WTC11 (cell line): ENCODE measurements at regions of chr22 and their contacts with region 1.

Region 1: GRCh38 chr22:30386960-30387827 is at the start of gene RNF215:
- DNase-seq: peak; percentile 96
- ATAC-seq: peak; percentile 83
- H3K4me3 Mint-ChIP-seq: peak within 1 kb of the TSS; percentile 79
- H3K27ac Mint-ChIP-seq: peak within 1 kb of the TSS; percentile 96
- H3K4me1 Mint-ChIP-seq: peaks cover 14% of the 10 kb centered on the region
- H3K27me3 Mint-ChIP-seq: peaks cover 11% of the 10 kb centered on the region
- CTCF ChIP-seq: peak; percentile 96
- total RNA-seq, gene RNF215: 25.4 to 28.6 TPM (median 27.6 TPM) in 3 replicates

Region 2: GRCh38 chr22:30326706-30327362 is 60.4 kb before region 1 on chr22 and contains the start of gene TBC1D10A:
- CTCF ChIA-PET with region 1: interaction called, 24 read pairs
- POLR2A ChIA-PET with region 1: interaction called, 5 read pairs
- DNase-seq: peak; percentile 95
- ATAC-seq: peak; percentile 93
- H3K4me3 Mint-ChIP-seq: peak within 1 kb of the TSS; percentile 75
- H3K27ac Mint-ChIP-seq: peak within 1 kb of the TSS; percentile 89
- H3K4me1 Mint-ChIP-seq: peaks cover 28% of the 10 kb centered on the region
- H3K27me3 Mint-ChIP-seq: no peaks in the 10 kb centered on the region
- CTCF ChIP-seq: no peak
- total RNA-seq, gene TBC1D10A: 7.5 to 11.1 TPM (median 9.6 TPM) in 3 replicates

Region 3: DNA sequence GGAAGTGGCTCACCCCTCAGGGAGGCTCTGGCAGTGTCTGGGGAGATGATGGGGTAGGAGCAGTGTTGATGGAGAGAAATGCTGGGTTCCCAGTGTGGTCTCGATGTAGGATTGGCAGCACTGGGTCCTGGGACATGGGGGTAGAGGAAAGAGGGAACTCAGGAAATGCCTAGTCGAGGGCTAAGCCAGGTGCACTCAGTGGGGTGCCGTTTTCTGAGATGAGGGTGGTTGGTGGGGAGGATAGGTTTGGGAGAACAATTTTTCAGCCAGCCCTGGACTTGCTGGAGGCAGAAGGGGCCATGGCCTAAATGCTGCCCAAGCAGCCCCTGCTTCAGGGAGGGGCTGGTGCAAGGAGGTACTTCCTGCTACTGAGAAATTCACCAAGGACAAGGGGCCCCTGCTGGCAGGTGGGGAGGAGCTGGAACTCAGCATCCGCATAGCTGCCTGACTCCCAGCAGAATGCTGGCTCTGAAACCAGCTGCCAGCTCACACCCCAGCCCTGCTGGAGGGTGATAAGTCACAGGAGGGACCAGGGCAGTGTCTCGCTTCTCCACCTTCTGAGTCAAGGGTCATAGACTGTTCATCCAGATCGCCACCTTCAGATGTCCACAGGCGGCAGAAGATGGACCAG is 24.4 kb before region 1 on chr22:
- CTCF ChIA-PET with region 1: interaction called, 17 read pairs
- POLR2A ChIA-PET with region 1: no interaction called
- DNase-seq: peak; percentile 67
- ATAC-seq: peak; percentile 89
- H3K4me3 Mint-ChIP-seq: no peak overlapping the region
- H3K27ac Mint-ChIP-seq: peak overlapping the region; percentile 91
- H3K4me1 Mint-ChIP-seq: peaks cover 25% of the 10 kb centered on the region
- H3K27me3 Mint-ChIP-seq: no peaks in the 10 kb centered on the region
- CTCF ChIP-seq: no peak

Region 4: GRCh38 chr22:30373331-30374325 is 13.6 kb before region 1 on chr22:
- CTCF ChIA-PET with region 1: interaction called, 14 read pairs
- POLR2A ChIA-PET with region 1: interaction called, 3 read pairs
- DNase-seq: no peak
- ATAC-seq: no peak
- H3K4me3 Mint-ChIP-seq: no peak overlapping the region
- H3K27ac Mint-ChIP-seq: no peak overlapping the region
- H3K4me1 Mint-ChIP-seq: 0 out of 2 replicates have a peak, but pooled peaks cover 3% of the 10 kb centered on the region
- H3K27me3 Mint-ChIP-seq: no peaks in the 10 kb centered on the region
- CTCF ChIP-seq: no peak

Region 5: GRCh38 chr22:30444632-30445437 is 57.6 kb after region 1 on chr22:
- CTCF ChIA-PET with region 1: interaction called, 14 read pairs
- POLR2A ChIA-PET with region 1: interaction called, 5 read pairs
- DNase-seq: peak; percentile 85
- ATAC-seq: peak; percentile 90
- H3K4me3 Mint-ChIP-seq: peak overlapping the region; percentile 56
- H3K27ac Mint-ChIP-seq: no peak overlapping the region
- H3K4me1 Mint-ChIP-seq: peaks cover 7% of the 10 kb centered on the region
- H3K27me3 Mint-ChIP-seq: no peaks in the 10 kb centered on the region; the same call in 1 of the 2 replicates
- CTCF ChIP-seq: peak; percentile 91